CD4-positive, alpha-beta T cell (primary cell): ENCODE measurements at regions of chr9 and their contacts with region 1.

Region 1: DNA sequence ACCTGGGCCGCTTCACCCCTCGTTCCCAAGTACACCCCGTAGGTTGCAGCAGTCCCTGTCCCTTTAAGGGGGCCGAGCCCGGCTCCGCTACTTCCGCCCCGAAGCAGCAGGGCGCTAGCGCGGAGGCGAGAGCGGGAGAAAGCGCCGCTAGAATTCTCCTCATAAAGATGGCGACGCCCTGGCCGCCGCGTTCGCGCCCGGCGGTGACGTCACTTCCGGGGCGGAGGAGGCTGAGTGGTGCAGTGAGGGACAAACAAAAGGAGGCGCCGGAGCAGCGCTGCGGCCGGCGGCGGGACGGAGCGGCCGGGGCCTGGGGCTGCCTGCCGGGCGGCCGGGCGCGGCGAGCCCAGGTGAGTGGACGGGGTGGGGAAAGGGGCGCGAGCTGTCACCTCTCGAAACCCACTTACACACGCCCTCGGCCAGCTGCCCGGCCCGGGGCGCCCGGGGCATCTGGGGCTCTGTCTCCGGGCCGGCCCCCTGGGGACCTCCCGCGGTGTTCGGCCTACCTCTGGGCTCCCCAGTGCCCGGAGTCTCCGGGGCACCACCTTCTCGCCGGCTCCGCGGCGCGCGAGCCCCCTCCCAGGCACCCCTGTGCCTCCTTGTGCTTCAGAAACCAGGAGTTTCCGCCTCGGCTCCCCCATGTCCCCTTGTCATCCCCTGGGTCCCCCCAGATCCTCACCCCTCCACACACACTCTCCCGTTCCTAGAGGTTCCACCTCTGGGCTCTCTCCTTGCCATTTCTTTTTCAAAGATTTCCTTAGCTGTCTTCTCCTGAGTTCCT is at the starts of genes KYAT1 and LRRC8A:
- DNase-seq: peak; percentile 95 to 99 (median 98)
- ATAC-seq: peak; percentile 93
- H3K4me3 ChIP-seq: peak within 1 kb of the TSS; percentile 98
- H3K4me3 Mint-ChIP-seq: peak within 1 kb of the TSS; percentile 98
- H3K27ac ChIP-seq: peak within 1 kb of the TSS; percentile 72 to 77
- H3K27ac Mint-ChIP-seq: peak within 1 kb of the TSS; percentile 90
- H3K4me1 ChIP-seq: peaks cover 55% of the 10 kb centered on the region
- H3K4me1 Mint-ChIP-seq: peaks cover 76% of the 10 kb centered on the region
- H3K27me3 ChIP-seq: no peaks in the 10 kb centered on the region
- H3K27me3 Mint-ChIP-seq: no peaks in the 10 kb centered on the region
- CTCF ChIP-seq: no peak
- total RNA-seq, gene KYAT1: 2.8 to 4.7 TPM
- total RNA-seq, gene LRRC8A: 35.0 to 35.8 TPM

Region 2: GRCh38 chr9:127450830-127451724 is 1431.0 kb before region 1 on chr9 and contains the starts of genes LRSAM1 and RPL12:
- CTCF ChIA-PET with region 1: no interaction called
- POLR2A ChIA-PET with region 1: no interaction called
- intact Hi-C with region 1: loop called in 1 of 2 experiments (anchors 5 kb)
- DNase-seq: peak; percentile 97 to 100 (median 99)
- ATAC-seq: peak; percentile 84
- H3K4me3 ChIP-seq: peak within 1 kb of the TSS; percentile 89
- H3K4me3 Mint-ChIP-seq: peak within 1 kb of the TSS; percentile 99
- H3K27ac ChIP-seq: peak within 1 kb of the TSS; percentile 74 to 92
- H3K27ac Mint-ChIP-seq: peak within 1 kb of the TSS; percentile 99
- H3K4me1 ChIP-seq: peaks cover 41% of the 10 kb centered on the region
- H3K4me1 Mint-ChIP-seq: peaks cover 40% of the 10 kb centered on the region
- H3K27me3 ChIP-seq: no peaks in the 10 kb centered on the region
- H3K27me3 Mint-ChIP-seq: no peaks in the 10 kb centered on the region
- CTCF ChIP-seq: no peak
- total RNA-seq, gene LRSAM1: 11.4 to 16.0 TPM
- total RNA-seq, gene RPL12: 1,884 to 1,993 TPM

Region 3: DNA sequence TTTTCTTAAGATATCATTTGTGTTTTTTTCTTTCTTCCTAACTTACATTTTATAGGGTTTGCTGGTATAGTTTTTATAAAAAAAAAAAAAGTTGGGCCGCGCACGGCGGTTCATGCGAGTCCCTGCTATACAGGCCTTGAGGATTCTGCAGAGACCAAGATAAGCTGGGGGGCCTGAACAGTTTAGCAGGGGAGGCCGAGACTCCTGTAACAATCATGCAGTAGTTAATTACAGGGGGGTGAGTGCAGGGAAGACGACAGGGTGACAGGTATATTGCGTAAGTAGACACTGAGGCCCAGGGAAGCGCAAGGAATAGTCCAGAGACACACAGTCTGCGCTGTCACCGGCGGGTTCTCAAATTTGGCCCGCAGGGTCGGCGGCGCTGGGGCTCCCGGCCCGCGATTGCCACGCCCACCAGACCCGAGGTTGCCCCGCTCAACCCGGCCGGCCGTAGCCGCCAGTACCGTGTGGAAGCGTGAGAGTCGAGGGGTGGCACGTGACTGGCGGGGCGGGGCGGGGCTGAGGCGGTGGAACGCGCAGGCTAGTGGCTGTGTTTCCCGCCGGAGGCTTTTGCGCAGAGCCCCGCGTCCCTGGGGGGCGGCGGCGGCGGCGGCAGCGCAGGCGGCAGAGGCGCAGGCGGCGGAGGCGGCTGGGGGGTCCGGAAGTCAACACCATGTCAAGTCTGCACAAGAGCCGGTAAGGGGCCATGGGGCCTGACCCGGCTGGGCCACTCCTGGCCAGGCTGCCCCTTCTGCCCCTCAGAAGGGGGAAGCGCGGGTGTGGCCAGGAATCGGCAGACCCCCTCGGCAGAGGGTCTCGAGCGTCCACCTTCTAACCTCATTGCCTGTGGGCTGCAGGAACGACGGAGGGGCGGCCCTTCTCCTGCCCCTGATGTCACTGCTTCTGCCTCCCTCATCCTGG is 95.2 kb before region 1 on chr9 and contains the start of gene TBC1D13:
- CTCF ChIA-PET with region 1: no interaction called
- POLR2A ChIA-PET with region 1: interaction called, 3 read pairs
- intact Hi-C with region 1: loop called in 1 of 2 experiments (anchors 1 kb)
- DNase-seq: peak; percentile 82 to 95 (median 87)
- ATAC-seq: peak; percentile 92
- H3K4me3 ChIP-seq: peak within 1 kb of the TSS; percentile 79
- H3K4me3 Mint-ChIP-seq: peak within 1 kb of the TSS; percentile 96
- H3K27ac ChIP-seq: peak within 1 kb of the TSS; percentile 67 to 77
- H3K27ac Mint-ChIP-seq: peak within 1 kb of the TSS; percentile 99
- H3K4me1 ChIP-seq: peaks cover 23% of the 10 kb centered on the region
- H3K4me1 Mint-ChIP-seq: peaks cover 25% of the 10 kb centered on the region
- H3K27me3 ChIP-seq: no peaks in the 10 kb centered on the region
- H3K27me3 Mint-ChIP-seq: no peaks in the 10 kb centered on the region
- CTCF ChIP-seq: no peak
- total RNA-seq, gene TBC1D13: 25.4 to 28.7 TPM

Region 4: GRCh38 chr9:128863647-128864046 is 18.4 kb before region 1 on chr9:
- CTCF ChIA-PET with region 1: interaction called, 5 read pairs
- POLR2A ChIA-PET with region 1: no interaction called
- intact Hi-C with region 1: loop called in 1 of 2 experiments (anchors 2 kb)
- DNase-seq: peak; percentile 73 to 92 (median 82)
- ATAC-seq: peak; percentile 98
- H3K4me3 ChIP-seq: no peak overlapping the region
- H3K4me3 Mint-ChIP-seq: no peak overlapping the region
- H3K27ac ChIP-seq: no peak overlapping the region
- H3K27ac Mint-ChIP-seq: peak overlapping the region; percentile 36
- H3K4me1 ChIP-seq: peaks cover 5% of the 10 kb centered on the region
- H3K4me1 Mint-ChIP-seq: peaks cover 4% of the 10 kb centered on the region
- H3K27me3 ChIP-seq: no peaks in the 10 kb centered on the region
- H3K27me3 Mint-ChIP-seq: no peaks in the 10 kb centered on the region
- CTCF ChIP-seq: peak; percentile 92

Region 5: DNA sequence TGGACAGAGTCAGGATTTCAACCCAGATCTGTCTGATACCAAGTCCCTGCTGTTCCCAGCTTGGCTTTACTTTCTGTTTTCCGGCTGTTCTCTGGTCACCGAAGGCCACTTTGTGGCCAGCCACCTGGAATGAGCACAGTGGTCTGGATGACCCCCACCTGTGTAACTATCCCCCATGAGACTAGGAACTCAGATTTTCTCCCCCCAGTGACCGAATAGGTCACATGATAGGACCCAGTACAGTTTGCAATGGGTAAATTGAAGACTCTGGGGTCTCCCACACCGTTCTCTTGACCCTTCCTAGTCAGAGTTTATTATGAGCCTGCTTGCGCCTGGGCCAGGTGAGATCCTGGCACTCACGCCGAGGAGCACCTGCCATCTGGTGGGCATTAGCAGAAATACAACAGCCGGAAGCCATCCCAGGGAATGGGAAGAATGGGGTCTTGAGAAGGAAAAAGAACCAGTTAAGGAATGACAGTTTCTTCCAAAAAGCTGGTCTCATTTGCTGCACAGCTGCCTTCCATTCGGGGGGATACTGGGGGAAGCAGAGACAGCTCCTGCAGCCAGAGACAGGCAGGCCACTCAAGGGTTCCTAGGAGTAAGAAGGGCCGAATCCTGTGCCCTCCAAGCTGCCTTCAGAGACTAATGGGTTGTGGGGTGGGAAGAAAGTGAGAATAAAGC is 45.8 kb after region 1 on chr9:
- CTCF ChIA-PET with region 1: interaction called, 5 read pairs
- POLR2A ChIA-PET with region 1: interaction called, 6 read pairs
- intact Hi-C with region 1: loop called (anchors 5 kb)
- DNase-seq: peak; percentile 38 to 77 (median 46)
- ATAC-seq: peak; percentile 84
- H3K4me3 ChIP-seq: no peak overlapping the region
- H3K4me3 Mint-ChIP-seq: no peak overlapping the region
- H3K27ac ChIP-seq: no peak overlapping the region
- H3K27ac Mint-ChIP-seq: no peak overlapping the region
- H3K4me1 ChIP-seq: peaks cover 16% of the 10 kb centered on the region
- H3K4me1 Mint-ChIP-seq: peaks cover 19% of the 10 kb centered on the region
- H3K27me3 ChIP-seq: no peaks in the 10 kb centered on the region
- H3K27me3 Mint-ChIP-seq: no peaks in the 10 kb centered on the region
- CTCF ChIP-seq: peak; percentile 98

Region 6: GRCh38 chr9:129036241-129036922 is 154.3 kb after region 1 on chr9 and contains the start of gene MIGA2:
- CTCF ChIA-PET with region 1: no interaction called
- POLR2A ChIA-PET with region 1: no interaction called
- intact Hi-C with region 1: loop called in 1 of 2 experiments (anchors 1 kb)
- DNase-seq: peak; percentile 79 to 98 (median 90)
- ATAC-seq: peak; percentile 92
- H3K4me3 ChIP-seq: peak within 1 kb of the TSS; percentile 84
- H3K4me3 Mint-ChIP-seq: peak within 1 kb of the TSS; percentile 89
- H3K27ac ChIP-seq: peak within 1 kb of the TSS; percentile 13 to 46
- H3K27ac Mint-ChIP-seq: peak within 1 kb of the TSS; percentile 52
- H3K4me1 ChIP-seq: peaks cover 34% of the 10 kb centered on the region
- H3K4me1 Mint-ChIP-seq: peaks cover 35% of the 10 kb centered on the region
- H3K27me3 ChIP-seq: no peaks in the 10 kb centered on the region
- H3K27me3 Mint-ChIP-seq: no peaks in the 10 kb centered on the region
- CTCF ChIP-seq: no peak
- total RNA-seq, gene MIGA2: 53.2 to 56.9 TPM